SK-N-SH (cell line): ENCODE measurements at regions of chr1 and their contacts with region 1.

Region 1: DNA sequence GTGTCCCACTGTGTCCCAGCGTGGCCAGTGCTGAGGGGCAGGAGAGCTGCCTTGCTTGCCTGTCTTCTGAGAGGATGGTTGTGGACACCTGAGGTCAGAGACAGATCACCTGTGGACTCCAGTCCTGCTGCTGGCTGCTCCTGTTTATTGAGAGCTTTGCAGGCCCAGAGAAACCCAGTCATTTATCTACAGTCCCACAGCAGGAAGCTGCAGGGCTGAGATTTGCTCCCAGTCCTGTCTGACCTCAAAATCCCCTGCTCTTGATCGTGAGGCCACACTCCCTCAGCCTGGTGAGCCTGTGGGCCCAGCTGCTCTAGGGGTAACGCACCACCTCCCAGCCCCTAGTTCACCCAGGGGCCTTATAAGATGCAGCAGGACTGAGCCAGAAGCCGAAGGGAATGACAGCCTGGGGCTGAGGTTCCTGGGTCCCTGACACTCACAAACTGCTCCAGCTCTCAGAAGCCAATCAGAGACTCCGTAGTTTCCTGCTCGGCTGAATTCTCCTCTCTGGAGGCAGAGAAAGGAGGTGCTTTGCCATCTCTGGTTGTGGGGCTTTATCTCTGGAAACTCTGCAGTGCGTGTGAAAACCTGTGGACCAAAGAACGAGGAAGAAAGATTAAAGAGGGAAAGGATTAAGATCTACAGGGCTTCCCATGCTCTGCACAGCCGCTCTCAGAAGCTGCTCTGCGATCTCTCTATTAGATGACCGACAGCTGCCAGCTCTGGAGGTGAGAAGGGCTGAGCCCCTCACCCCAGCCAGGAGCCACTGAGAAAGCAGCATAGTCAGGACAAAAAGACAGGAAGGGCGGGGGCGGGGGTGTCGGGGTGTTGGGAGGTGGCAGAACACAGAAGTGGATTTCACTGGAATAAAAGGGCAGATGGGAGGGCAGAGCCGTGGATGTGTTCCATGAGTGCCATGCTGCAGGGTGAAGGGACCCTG is 39.1 kb downstream of the UBIAD1 start:
- DNase-seq: no peak
- H3K4me3 ChIP-seq: no peak overlapping the region
- H3K27ac ChIP-seq: peak overlapping the region in 1 of 2 experiments; percentile 28; a peak in 1 of 4 replicates
- H3K4me1 ChIP-seq: peaks cover 0 to 29% of the 10 kb centered on the region in 2 experiments; a peak in 1 of 4 replicates
- H3K27me3 ChIP-seq: no peaks in the 10 kb centered on the region
- CTCF ChIP-seq: no peak
- EP300 ChIP-seq: no peak
- RAD21 ChIP-seq: no peak

Region 2: DNA sequence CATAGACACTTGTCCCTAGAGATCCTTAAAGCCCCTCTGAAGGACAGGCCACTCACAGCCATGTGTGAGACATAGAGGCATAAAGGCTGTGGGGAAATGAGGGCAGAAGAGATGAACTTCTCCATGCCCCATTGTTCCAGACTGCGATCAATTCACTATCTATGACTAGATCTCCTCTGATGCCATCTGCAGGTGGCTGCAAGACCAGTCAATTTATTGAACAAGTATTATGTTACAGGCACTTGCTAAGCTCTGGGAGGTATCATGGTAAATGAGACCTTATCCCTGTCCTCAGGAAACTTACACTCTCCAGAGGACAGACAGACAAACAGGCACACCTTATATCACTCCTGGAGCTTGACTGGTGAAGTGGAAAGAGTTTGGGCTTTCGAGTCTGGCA is 16.2 kb before region 1 on chr1:
- CTCF ChIA-PET with region 1: interaction called, 10 read pairs
- POLR2A ChIA-PET with region 1: interaction called, 6 read pairs
- DNase-seq: no peak
- H3K4me3 ChIP-seq: no peak overlapping the region
- H3K27ac ChIP-seq: no peak overlapping the region
- H3K4me1 ChIP-seq: peaks cover 0 to 22% of the 10 kb centered on the region in 2 experiments; a peak in 1 of 4 replicates
- H3K27me3 ChIP-seq: no peaks in the 10 kb centered on the region
- CTCF ChIP-seq: no peak
- EP300 ChIP-seq: no peak
- RAD21 ChIP-seq: no peak